Head of caudate nucleus (tissue), 42 donors: ENCODE measurements at regions of chr13 and their contacts with region 1.

Region 1: DNA sequence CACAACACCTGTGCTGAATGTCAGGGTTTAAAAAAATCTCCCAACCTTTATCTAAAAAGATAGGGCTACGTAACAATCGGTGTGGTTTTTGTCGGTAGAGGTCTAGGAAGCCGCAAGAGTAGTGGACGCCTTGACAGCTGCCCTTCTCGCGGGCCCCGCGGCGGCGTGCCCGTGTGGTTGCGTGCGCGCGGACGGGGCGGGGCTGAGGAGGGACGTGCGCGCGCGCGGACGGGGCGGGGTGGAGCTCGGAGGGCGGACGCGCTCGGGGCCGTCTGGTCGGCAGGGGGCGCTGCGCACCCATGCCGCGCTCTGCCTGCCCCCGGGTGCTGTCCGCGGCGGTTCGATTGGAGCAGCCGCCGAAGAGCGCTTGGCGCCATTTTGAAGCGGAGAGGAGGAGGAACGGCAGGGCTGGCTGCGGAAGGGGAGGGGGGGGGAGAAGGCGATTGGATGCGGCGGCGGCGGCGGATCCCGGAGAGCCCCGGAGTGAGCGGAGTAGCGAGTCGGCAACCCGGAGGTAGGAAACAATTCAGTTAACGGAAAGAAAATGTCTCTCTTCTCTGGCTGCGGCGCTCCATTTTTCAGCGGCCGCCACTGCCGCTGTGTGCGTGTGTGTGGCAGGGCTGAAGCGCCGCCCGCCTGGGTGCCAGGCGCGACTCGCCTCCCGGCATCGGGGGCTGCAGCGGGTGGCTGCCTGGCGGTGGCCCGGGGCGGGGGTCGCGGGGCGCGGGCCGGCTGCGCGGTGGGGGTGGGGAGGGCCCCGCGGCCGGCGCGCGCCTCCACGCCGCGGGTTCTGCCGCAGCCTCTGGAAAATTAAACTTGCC is at the start of gene PDS5B:
- DNase-seq: peak; percentile 79 to 98 (median 95)

Region 2: GRCh38 chr13:32381539-32381938 is 204.8 kb before region 1 on chr13:
- intact Hi-C with region 1: loop called (anchors 10 kb)
- DNase-seq: peak in 14 of 42 donors; percentile 2 to 63 (median 23)

Region 3: GRCh38 chr13:32639502-32640105 is 53.3 kb after region 1 on chr13:
- intact Hi-C with region 1: loop called (anchors 2 kb)
- DNase-seq: peak in 41 of 42 donors; percentile 16 to 89 (median 70)